PC-3 (cell line): ENCODE measurements at regions of chr1 and their contacts with region 1.

Region 1: GRCh38 chr1:55506686-55507577 is 291.8 kb upstream of the USP24 start:
- DNase-seq: peak; percentile 96
- ATAC-seq: peak; percentile 78
- H3K4me3 ChIP-seq: peak overlapping the region; percentile 33; the same call in 1 of the 2 replicates
- H3K27ac ChIP-seq: peak overlapping the region; percentile 95
- H3K4me1 ChIP-seq: peaks cover 49% of the 10 kb centered on the region
- H3K27me3 ChIP-seq: no peaks in the 10 kb centered on the region
- CTCF ChIP-seq: peak; percentile 49; the same call in 1 of the 2 replicates

Region 2: DNA sequence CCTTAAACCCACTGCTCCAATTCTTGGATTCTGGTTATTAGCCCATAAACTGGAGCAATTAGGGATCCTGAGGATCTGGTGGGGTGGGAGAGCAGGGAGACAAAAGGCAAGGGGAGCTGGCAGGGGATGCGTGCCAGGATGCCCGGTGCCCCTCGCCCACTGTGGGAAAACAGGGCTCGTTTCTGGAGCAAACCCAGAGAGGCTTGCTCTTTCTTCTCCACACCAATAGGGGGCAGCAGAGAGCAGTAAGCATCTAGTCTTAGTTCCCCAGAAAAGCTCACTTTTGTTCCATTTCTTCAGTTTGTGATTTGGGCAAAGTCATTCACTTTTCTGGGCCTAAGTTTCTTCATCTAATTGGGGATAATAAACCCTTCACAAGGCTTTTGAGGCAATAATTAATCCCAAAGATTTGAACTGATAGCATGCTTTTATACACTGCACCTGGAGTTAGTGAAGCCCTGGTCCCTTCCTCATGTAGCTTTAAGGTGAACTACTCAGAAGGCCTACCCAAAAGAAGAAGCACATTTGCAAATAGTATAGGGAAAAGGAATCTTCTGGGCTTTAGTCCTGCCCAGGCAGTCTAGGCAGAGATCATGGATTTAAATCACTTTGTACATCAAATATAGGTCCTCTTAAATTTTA is 131.2 kb before region 1 on chr1:
- CTCF ChIA-PET with region 1: interaction called, 7 read pairs
- POLR2A ChIA-PET with region 1: no interaction called
- intact Hi-C with region 1: loop called (anchors 2 kb)
- DNase-seq: peak; percentile 58
- ATAC-seq: peak; percentile 21
- H3K4me3 ChIP-seq: no peak overlapping the region; the same call in 1 of the 2 replicates
- H3K27ac ChIP-seq: peak overlapping the region; percentile 90
- H3K4me1 ChIP-seq: peaks cover 49% of the 10 kb centered on the region
- H3K27me3 ChIP-seq: no peaks in the 10 kb centered on the region
- CTCF ChIP-seq: peak; percentile 95

Region 3: GRCh38 chr1:55428944-55429931 is 77.7 kb before region 1 on chr1:
- CTCF ChIA-PET with region 1: no interaction called
- POLR2A ChIA-PET with region 1: no interaction called
- intact Hi-C with region 1: loop called (anchors 1 kb)
- DNase-seq: peak; percentile 99
- ATAC-seq: peak; percentile 87
- H3K4me3 ChIP-seq: no peak overlapping the region
- H3K27ac ChIP-seq: peak overlapping the region; percentile 99
- H3K4me1 ChIP-seq: peaks cover 46% of the 10 kb centered on the region
- H3K27me3 ChIP-seq: no peaks in the 10 kb centered on the region
- CTCF ChIP-seq: no peak

Region 4: GRCh38 chr1:55542901-55543504 is 36.1 kb after region 1 on chr1:
- CTCF ChIA-PET with region 1: no interaction called
- POLR2A ChIA-PET with region 1: no interaction called
- intact Hi-C with region 1: loop called (anchors 5 kb)
- DNase-seq: peak; percentile 83
- ATAC-seq: peak; percentile 80
- H3K4me3 ChIP-seq: peak overlapping the region; percentile 5; the same call in 1 of the 2 replicates
- H3K27ac ChIP-seq: peak overlapping the region; percentile 77
- H3K4me1 ChIP-seq: peaks cover 33% of the 10 kb centered on the region
- H3K27me3 ChIP-seq: no peaks in the 10 kb centered on the region
- CTCF ChIP-seq: no peak

Region 5: GRCh38 chr1:55584526-55585401 is 77.8 kb after region 1 on chr1:
- CTCF ChIA-PET with region 1: no interaction called
- POLR2A ChIA-PET with region 1: no interaction called
- intact Hi-C with region 1: loop called (anchors 2 kb)
- DNase-seq: peak; percentile 29
- ATAC-seq: peak; percentile 50
- H3K4me3 ChIP-seq: no peak overlapping the region
- H3K27ac ChIP-seq: no peak overlapping the region
- H3K4me1 ChIP-seq: peaks cover 22% of the 10 kb centered on the region
- H3K27me3 ChIP-seq: no peaks in the 10 kb centered on the region
- CTCF ChIP-seq: peak; percentile 50

Region 6: GRCh38 chr1:55685560-55685959 is 178.6 kb after region 1 on chr1:
- CTCF ChIA-PET with region 1: no interaction called
- POLR2A ChIA-PET with region 1: no interaction called
- intact Hi-C with region 1: loop called (anchors 1 kb)
- DNase-seq: no peak
- ATAC-seq: no peak
- H3K4me3 ChIP-seq: no peak overlapping the region
- H3K27ac ChIP-seq: 0 out of 2 replicates have a peak overlapping the region, but pooled peaks have one; percentile 88
- H3K4me1 ChIP-seq: peaks cover 23% of the 10 kb centered on the region
- H3K27me3 ChIP-seq: no peaks in the 10 kb centered on the region
- CTCF ChIP-seq: no peak

Region 7: GRCh38 chr1:55868026-55868425 is 361.1 kb after region 1 on chr1:
- CTCF ChIA-PET with region 1: no interaction called
- POLR2A ChIA-PET with region 1: no interaction called
- intact Hi-C with region 1: loop called (anchors 10 kb)
- DNase-seq: peak; percentile 48
- ATAC-seq: peak; percentile 45
- H3K4me3 ChIP-seq: no peak overlapping the region
- H3K27ac ChIP-seq: peak overlapping the region; percentile 25
- H3K4me1 ChIP-seq: peaks cover 23% of the 10 kb centered on the region
- H3K27me3 ChIP-seq: no peaks in the 10 kb centered on the region
- CTCF ChIP-seq: peak; percentile 40; the same call in 1 of the 2 replicates